Naive thymus-derived CD4-positive, alpha-beta T cell (primary cell): ENCODE measurements at regions of chr14 and their contacts with region 1.

Region 1: DNA sequence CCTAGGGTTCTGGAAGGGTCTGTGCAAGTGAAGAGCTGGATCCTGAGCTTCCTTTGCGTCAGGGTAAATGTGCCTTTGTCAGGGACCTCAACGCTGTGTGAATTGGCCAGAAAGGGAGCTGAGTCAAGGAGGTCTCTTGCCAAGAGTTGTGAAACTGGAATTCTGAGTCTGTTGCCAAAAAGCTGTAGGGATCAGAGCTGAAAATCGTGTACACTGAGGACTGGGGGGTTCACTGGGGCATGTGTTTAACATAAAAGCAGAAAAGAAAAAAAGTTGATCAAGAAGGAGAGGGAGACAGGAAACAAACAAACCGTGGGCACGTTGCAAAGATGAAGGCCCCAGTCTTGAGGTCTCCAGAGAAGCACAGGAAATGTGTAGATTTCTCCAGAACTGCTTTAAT is 1081.5 kb downstream of the VRK1 start:
- DNase-seq: peak in 7 of 9 donors; percentile 31 to 77 (median 70)
- ATAC-seq: peak; percentile 78
- H3K4me3 ChIP-seq: no peak overlapping the region
- H3K4me3 Mint-ChIP-seq: peak overlapping the region in 9 of 10 donors; percentile 2 to 70 (median 41)
- H3K27ac ChIP-seq: peak overlapping the region; percentile 51
- H3K27ac Mint-ChIP-seq: peak overlapping the region; percentile 81 to 99 (median 90)
- H3K4me1 ChIP-seq: peaks cover 3 to 36% of the 10 kb centered on the region in 2 donors
- H3K4me1 Mint-ChIP-seq: peaks cover 12 to 75% (median 66%) of the 10 kb centered on the region in 7 donors
- H3K27me3 ChIP-seq: no peaks in the 10 kb centered on the region
- H3K27me3 Mint-ChIP-seq: peaks cover 0 to 3% (median 0%) of the 10 kb centered on the region in 5 donors

Region 2: GRCh38 chr14:97625477-97625876 is 253.2 kb before region 1 on chr14:
- CTCF ChIA-PET with region 1: interaction called, 4 read pairs
- POLR2A ChIA-PET with region 1: no interaction called
- intact Hi-C with region 1: loop called in 1 of 2 experiments (anchors 10 kb)
- DNase-seq: no peak
- ATAC-seq: no peak
- H3K4me3 ChIP-seq: no peak overlapping the region
- H3K4me3 Mint-ChIP-seq: no peak overlapping the region
- H3K27ac ChIP-seq: no peak overlapping the region
- H3K27ac Mint-ChIP-seq: peak overlapping the region in 3 of 9 donors; percentile 10 to 42 (median 38)
- H3K4me1 ChIP-seq: peaks cover 8 to 10% of the 10 kb centered on the region in 2 donors
- H3K4me1 Mint-ChIP-seq: peaks cover 18 to 50% (median 34%) of the 10 kb centered on the region in 7 donors
- H3K27me3 ChIP-seq: no peaks in the 10 kb centered on the region
- H3K27me3 Mint-ChIP-seq: peaks cover 0 to 9% (median 0%) of the 10 kb centered on the region in 5 donors

Region 3: GRCh38 chr14:97724265-97724731 is 154.4 kb before region 1 on chr14:
- CTCF ChIA-PET with region 1: no interaction called
- POLR2A ChIA-PET with region 1: no interaction called
- intact Hi-C with region 1: loop called in 1 of 2 experiments (anchors 10 kb)
- DNase-seq: peak in 8 of 9 donors; percentile 38 to 67 (median 59)
- ATAC-seq: peak; percentile 77
- H3K4me3 ChIP-seq: peak overlapping the region; percentile 57
- H3K4me3 Mint-ChIP-seq: peak overlapping the region; percentile 78 to 92 (median 84)
- H3K27ac ChIP-seq: peak overlapping the region; percentile 80
- H3K27ac Mint-ChIP-seq: peak overlapping the region; percentile 92 to 99 (median 97)
- H3K4me1 ChIP-seq: peaks cover 28 to 72% of the 10 kb centered on the region in 2 donors
- H3K4me1 Mint-ChIP-seq: peaks cover 51 to 94% (median 86%) of the 10 kb centered on the region in 7 donors
- H3K27me3 ChIP-seq: no peaks in the 10 kb centered on the region
- H3K27me3 Mint-ChIP-seq: no peaks in the 10 kb centered on the region

Region 4: DNA sequence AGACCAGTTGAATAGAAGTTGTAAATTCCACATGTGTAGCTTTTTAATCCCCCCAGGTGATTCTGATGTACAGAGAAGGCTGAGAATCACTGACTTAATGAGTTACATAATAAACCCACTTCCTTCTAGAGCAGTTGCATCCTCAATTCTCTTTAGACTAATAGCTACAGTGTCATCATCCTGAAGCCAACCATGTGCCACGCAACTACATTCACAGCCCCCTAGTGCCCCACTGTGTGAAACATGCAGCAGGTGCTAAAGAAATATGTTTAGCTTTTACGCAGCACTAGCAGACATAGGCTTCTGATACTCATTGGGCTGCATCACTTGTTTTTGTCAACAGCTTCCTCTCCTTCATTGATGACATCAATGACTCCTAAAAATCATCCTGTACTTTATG is 225.0 kb after region 1 on chr14:
- CTCF ChIA-PET with region 1: no interaction called
- POLR2A ChIA-PET with region 1: no interaction called
- intact Hi-C with region 1: loop called in 1 of 2 experiments (anchors 5 kb)
- DNase-seq: peak in 7 of 9 donors; percentile 29 to 73 (median 62)
- ATAC-seq: peak; percentile 81
- H3K4me3 ChIP-seq: no peak overlapping the region
- H3K4me3 Mint-ChIP-seq: peak overlapping the region in 1 of 10 donors; percentile 0
- H3K27ac ChIP-seq: no peak overlapping the region
- H3K27ac Mint-ChIP-seq: peak overlapping the region in 7 of 9 donors; percentile 1 to 64 (median 57)
- H3K4me1 ChIP-seq: peaks cover 0 to 16% of the 10 kb centered on the region in 2 donors
- H3K4me1 Mint-ChIP-seq: peaks cover 10 to 53% (median 35%) of the 10 kb centered on the region in 7 donors
- H3K27me3 ChIP-seq: no peaks in the 10 kb centered on the region
- H3K27me3 Mint-ChIP-seq: no peaks in the 10 kb centered on the region